Naive thymus-derived CD4-positive, alpha-beta T cell (primary cell): ENCODE measurements at regions of chr3 and their contacts with region 1.

Region 1: GRCh38 chr3:69306239-69307185 is 79.4 kb downstream of the FRMD4B start:
- DNase-seq: peak; percentile 35 to 72 (median 67)
- ATAC-seq: peak; percentile 98
- H3K4me3 ChIP-seq: no peak overlapping the region
- H3K4me3 Mint-ChIP-seq: peak overlapping the region in 3 of 10 donors; percentile 4 to 61 (median 44)
- H3K27ac ChIP-seq: no peak overlapping the region
- H3K27ac Mint-ChIP-seq: peak overlapping the region in 2 of 9 donors; percentile 29 to 35
- H3K4me1 ChIP-seq: no peaks in the 10 kb centered on the region
- H3K4me1 Mint-ChIP-seq: peaks cover 0 to 22% (median 4%) of the 10 kb centered on the region in 7 donors
- H3K27me3 ChIP-seq: no peaks in the 10 kb centered on the region
- H3K27me3 Mint-ChIP-seq: no peaks in the 10 kb centered on the region

Region 2: GRCh38 chr3:68764554-68764953 is 542.0 kb before region 1 on chr3:
- CTCF ChIA-PET with region 1: no interaction called
- POLR2A ChIA-PET with region 1: no interaction called
- intact Hi-C with region 1: no loop called
- DNase-seq: no peak
- ATAC-seq: no peak
- H3K4me3 ChIP-seq: no peak overlapping the region
- H3K4me3 Mint-ChIP-seq: no peak overlapping the region
- H3K27ac ChIP-seq: no peak overlapping the region
- H3K27ac Mint-ChIP-seq: no peak overlapping the region
- H3K4me1 ChIP-seq: no peaks in the 10 kb centered on the region
- H3K4me1 Mint-ChIP-seq: no peaks in the 10 kb centered on the region
- H3K27me3 ChIP-seq: no peaks in the 10 kb centered on the region
- H3K27me3 Mint-ChIP-seq: peaks cover 2 to 21% (median 18%) of the 10 kb centered on the region in 5 donors

Region 3: GRCh38 chr3:69013253-69014021 is 293.1 kb before region 1 on chr3 and contains the start of gene EOGT:
- CTCF ChIA-PET with region 1: interaction called, 3 read pairs
- POLR2A ChIA-PET with region 1: no interaction called
- intact Hi-C with region 1: loop called in 1 of 2 experiments (anchors 1 kb)
- DNase-seq: peak; percentile 59 to 87 (median 66)
- ATAC-seq: peak; percentile 92
- H3K4me3 ChIP-seq: peak within 1 kb of the TSS; percentile 68
- H3K4me3 Mint-ChIP-seq: peak within 1 kb of the TSS; percentile 84 to 95 (median 93)
- H3K27ac ChIP-seq: peak within 1 kb of the TSS; percentile 78
- H3K27ac Mint-ChIP-seq: peak within 1 kb of the TSS; percentile 32 to 94 (median 82)
- H3K4me1 ChIP-seq: peaks cover 0 to 12% of the 10 kb centered on the region in 2 donors
- H3K4me1 Mint-ChIP-seq: peaks cover 10 to 49% (median 26%) of the 10 kb centered on the region in 7 donors
- H3K27me3 ChIP-seq: no peaks in the 10 kb centered on the region
- H3K27me3 Mint-ChIP-seq: no peaks in the 10 kb centered on the region
- total RNA-seq, gene EOGT: 10.1 to 19.1 (median 13.1) TPM

Region 4: GRCh38 chr3:69120879-69121464 is 185.5 kb before region 1 on chr3:
- CTCF ChIA-PET with region 1: interaction called, 17 read pairs
- POLR2A ChIA-PET with region 1: interaction called, 3 read pairs
- intact Hi-C with region 1: loop called (anchors 1 kb)
- DNase-seq: peak; percentile 35 to 85 (median 78)
- ATAC-seq: peak; percentile 94
- H3K4me3 ChIP-seq: no peak overlapping the region
- H3K4me3 Mint-ChIP-seq: peak overlapping the region in 1 of 10 donors; percentile 16
- H3K27ac ChIP-seq: no peak overlapping the region
- H3K27ac Mint-ChIP-seq: peak overlapping the region in 1 of 9 donors; percentile 31
- H3K4me1 ChIP-seq: no peaks in the 10 kb centered on the region
- H3K4me1 Mint-ChIP-seq: peaks cover 1 to 10% (median 6%) of the 10 kb centered on the region in 7 donors
- H3K27me3 ChIP-seq: no peaks in the 10 kb centered on the region
- H3K27me3 Mint-ChIP-seq: peaks cover 0 to 7% (median 4%) of the 10 kb centered on the region in 5 donors

Region 5: GRCh38 chr3:69200384-69201068 is 106.0 kb before region 1 on chr3:
- CTCF ChIA-PET with region 1: interaction called, 5 read pairs
- POLR2A ChIA-PET with region 1: no interaction called
- intact Hi-C with region 1: loop called (anchors 1 kb)
- DNase-seq: peak in 2 of 9 donors; percentile 6 to 51
- ATAC-seq: no peak
- H3K4me3 ChIP-seq: peak overlapping the region; percentile 70
- H3K4me3 Mint-ChIP-seq: peak overlapping the region; percentile 70 to 91 (median 86)
- H3K27ac ChIP-seq: no peak overlapping the region
- H3K27ac Mint-ChIP-seq: peak overlapping the region; percentile 7 to 93 (median 86)
- H3K4me1 ChIP-seq: peaks cover 14 to 22% of the 10 kb centered on the region in 2 donors
- H3K4me1 Mint-ChIP-seq: peaks cover 13 to 71% (median 43%) of the 10 kb centered on the region in 7 donors
- H3K27me3 ChIP-seq: no peaks in the 10 kb centered on the region
- H3K27me3 Mint-ChIP-seq: no peaks in the 10 kb centered on the region

Region 6: GRCh38 chr3:69236812-69237707 is 69.5 kb before region 1 on chr3:
- CTCF ChIA-PET with region 1: interaction called, 6 read pairs
- POLR2A ChIA-PET with region 1: no interaction called
- intact Hi-C with region 1: loop called in 1 of 2 experiments (anchors 2 kb)
- DNase-seq: peak in 1 of 9 donors; percentile 5
- ATAC-seq: no peak
- H3K4me3 ChIP-seq: no peak overlapping the region
- H3K4me3 Mint-ChIP-seq: peak overlapping the region in 8 of 10 donors; percentile 58 to 78 (median 68)
- H3K27ac ChIP-seq: no peak overlapping the region
- H3K27ac Mint-ChIP-seq: peak overlapping the region in 8 of 9 donors; percentile 1 to 80 (median 42)
- H3K4me1 ChIP-seq: peaks cover 5 to 17% of the 10 kb centered on the region in 2 donors
- H3K4me1 Mint-ChIP-seq: peaks cover 9 to 33% (median 19%) of the 10 kb centered on the region in 7 donors
- H3K27me3 ChIP-seq: no peaks in the 10 kb centered on the region
- H3K27me3 Mint-ChIP-seq: no peaks in the 10 kb centered on the region

Region 7: GRCh38 chr3:69410250-69410649 is 103.7 kb after region 1 on chr3:
- CTCF ChIA-PET with region 1: no interaction called
- POLR2A ChIA-PET with region 1: no interaction called
- intact Hi-C with region 1: loop called (anchors 1 to 2 kb)
- DNase-seq: peak; percentile 9 to 60 (median 46)
- ATAC-seq: peak; percentile 93
- H3K4me3 ChIP-seq: no peak overlapping the region
- H3K4me3 Mint-ChIP-seq: no peak overlapping the region
- H3K27ac ChIP-seq: no peak overlapping the region
- H3K27ac Mint-ChIP-seq: no peak overlapping the region
- H3K4me1 ChIP-seq: no peaks in the 10 kb centered on the region
- H3K4me1 Mint-ChIP-seq: peaks cover 1 to 10% (median 5%) of the 10 kb centered on the region in 7 donors
- H3K27me3 ChIP-seq: no peaks in the 10 kb centered on the region
- H3K27me3 Mint-ChIP-seq: peaks cover 0 to 3% (median 0%) of the 10 kb centered on the region in 5 donors

Region 8: DNA sequence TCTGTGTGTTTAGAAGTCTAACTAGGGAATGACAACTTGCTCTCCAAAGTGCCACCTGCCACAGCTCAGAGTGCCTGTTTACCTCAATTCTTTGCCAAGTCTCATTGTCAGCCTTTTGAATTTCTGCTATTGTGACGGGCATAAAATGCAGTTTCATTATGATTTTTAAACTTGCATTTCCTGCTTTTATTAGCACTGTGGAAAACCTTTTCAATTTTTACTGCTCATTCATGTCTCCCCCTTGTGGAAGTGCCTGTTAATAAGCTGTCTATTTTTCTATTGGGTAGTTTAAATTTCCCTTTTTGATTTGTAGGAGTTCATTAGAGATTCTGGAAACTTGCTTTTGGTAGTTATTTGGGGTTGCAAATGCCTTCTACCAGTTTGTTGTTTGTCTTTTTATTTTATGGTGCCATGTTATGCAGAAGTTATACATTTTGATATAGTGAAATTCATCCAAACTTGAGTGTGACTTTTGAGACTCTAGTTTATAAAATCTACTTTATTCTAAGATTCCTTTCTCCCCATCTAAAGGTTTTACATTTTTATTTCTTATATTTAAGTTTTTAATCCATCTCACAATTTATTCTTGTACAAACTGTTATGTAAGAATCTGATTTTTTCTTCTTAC is 133.2 kb after region 1 on chr3:
- CTCF ChIA-PET with region 1: no interaction called
- POLR2A ChIA-PET with region 1: no interaction called
- intact Hi-C with region 1: no loop called
- DNase-seq: peak in 1 of 9 donors; percentile 1
- ATAC-seq: peak; percentile 27
- H3K4me3 ChIP-seq: no peak overlapping the region
- H3K4me3 Mint-ChIP-seq: peak overlapping the region in 1 of 10 donors; percentile 14
- H3K27ac ChIP-seq: no peak overlapping the region
- H3K27ac Mint-ChIP-seq: peak overlapping the region in 1 of 9 donors; percentile 36
- H3K4me1 ChIP-seq: no peaks in the 10 kb centered on the region
- H3K4me1 Mint-ChIP-seq: peaks cover 0 to 16% (median 0%) of the 10 kb centered on the region in 7 donors
- H3K27me3 ChIP-seq: no peaks in the 10 kb centered on the region
- H3K27me3 Mint-ChIP-seq: no peaks in the 10 kb centered on the region

Region 9: DNA sequence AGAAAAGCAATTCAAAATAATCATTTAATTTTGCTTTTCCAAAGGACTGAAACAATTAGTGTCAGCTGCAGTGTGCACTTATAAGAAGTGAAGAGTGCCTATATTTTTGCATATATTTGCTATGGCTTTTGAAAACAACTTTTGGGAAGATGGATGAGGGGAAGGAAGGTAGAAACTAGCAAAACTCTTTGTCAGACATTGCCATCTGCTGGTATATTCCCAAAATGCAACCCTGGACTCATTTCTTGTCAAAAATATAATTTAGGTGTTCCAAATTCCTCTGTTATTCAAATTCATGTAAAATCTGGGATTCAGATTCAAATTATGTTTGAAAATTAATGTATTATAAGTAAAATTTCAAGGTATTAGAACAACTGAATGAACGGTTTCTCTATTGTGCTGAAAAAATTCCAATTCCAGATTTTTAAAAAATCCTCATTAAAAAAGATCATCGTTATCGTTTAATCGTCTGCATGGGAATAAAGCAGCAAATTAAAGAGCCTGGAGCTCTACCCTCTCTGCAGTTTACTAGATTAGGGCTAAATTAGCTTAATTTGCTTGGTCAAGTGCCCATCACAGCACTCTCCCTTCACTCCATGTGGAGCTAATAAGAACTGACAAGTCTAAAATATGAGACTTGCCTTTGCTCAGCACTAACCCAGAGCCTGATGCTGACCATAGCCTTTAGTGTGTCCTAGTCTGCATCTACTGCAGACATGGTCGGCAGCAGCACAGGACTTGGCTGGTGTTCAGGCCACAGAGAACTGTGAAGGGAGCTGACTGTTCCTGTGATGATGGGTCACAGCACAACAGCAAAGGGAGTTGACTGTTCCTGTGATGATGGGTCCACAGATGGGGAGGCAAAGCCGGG is 364.8 kb after region 1 on chr3:
- CTCF ChIA-PET with region 1: no interaction called
- POLR2A ChIA-PET with region 1: no interaction called
- intact Hi-C with region 1: loop called in 1 of 2 experiments (anchors 5 kb)
- DNase-seq: no peak
- ATAC-seq: no peak
- H3K4me3 ChIP-seq: no peak overlapping the region
- H3K4me3 Mint-ChIP-seq: no peak overlapping the region
- H3K27ac ChIP-seq: no peak overlapping the region
- H3K27ac Mint-ChIP-seq: no peak overlapping the region
- H3K4me1 ChIP-seq: no peaks in the 10 kb centered on the region
- H3K4me1 Mint-ChIP-seq: no peaks in the 10 kb centered on the region
- H3K27me3 ChIP-seq: no peaks in the 10 kb centered on the region
- H3K27me3 Mint-ChIP-seq: peaks cover 0 to 22% (median 4%) of the 10 kb centered on the region in 5 donors